ENCODE measurements at regions of chr16 and their contacts with region 1.

Region 1: GRCh38 chr16:83441517-83441916 is 366.3 kb upstream of the HSBP1 start:
- DNase-seq: no peak
- ATAC-seq: no peak
- H3K4me3 ChIP-seq: no peak overlapping the region
- H3K27ac ChIP-seq: no peak overlapping the region
- H3K4me1 ChIP-seq: no peaks in the 10 kb centered on the region
- H3K27me3 ChIP-seq: no peaks in the 10 kb centered on the region

Region 2: DNA sequence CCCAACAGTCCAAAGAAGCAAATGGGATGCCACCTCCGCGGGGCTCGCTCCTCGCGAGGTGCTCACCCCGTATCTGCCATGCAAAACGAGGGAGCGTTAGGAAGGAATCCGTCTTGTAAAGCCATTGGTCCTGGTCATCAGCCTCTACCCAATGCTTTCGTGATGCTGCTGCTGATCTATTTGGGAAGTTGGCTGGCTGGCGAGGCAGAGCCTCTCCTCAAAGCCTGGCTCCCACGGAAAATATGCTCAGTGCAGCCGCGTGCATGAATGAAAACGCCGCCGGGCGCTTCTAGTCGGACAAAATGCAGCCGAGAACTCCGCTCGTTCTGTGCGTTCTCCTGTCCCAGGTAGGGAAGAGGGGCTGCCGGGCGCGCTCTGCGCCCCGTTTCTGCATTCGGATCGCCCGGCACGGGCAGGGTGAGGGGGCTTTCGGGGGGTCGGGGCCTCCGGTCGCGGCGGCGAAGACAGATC is 814.7 kb before region 1 on chr16 and contains the start of gene CDH13:
- intact Hi-C with region 1: loop called in 1 of 4 experiments (anchors 10 kb)
- DNase-seq: peak; percentile 34 to 72 (median 66)
- ATAC-seq: peak; percentile 49 to 54
- H3K4me3 ChIP-seq: peak within 1 kb of the TSS; percentile 71
- H3K27ac ChIP-seq: peak within 1 kb of the TSS; percentile 17
- H3K4me1 ChIP-seq: peaks cover 20% of the 10 kb centered on the region
- H3K27me3 ChIP-seq: no peaks in the 10 kb centered on the region
- total RNA-seq, gene CDH13: 91.9 to 123 (median 103) TPM

Region 3: DNA sequence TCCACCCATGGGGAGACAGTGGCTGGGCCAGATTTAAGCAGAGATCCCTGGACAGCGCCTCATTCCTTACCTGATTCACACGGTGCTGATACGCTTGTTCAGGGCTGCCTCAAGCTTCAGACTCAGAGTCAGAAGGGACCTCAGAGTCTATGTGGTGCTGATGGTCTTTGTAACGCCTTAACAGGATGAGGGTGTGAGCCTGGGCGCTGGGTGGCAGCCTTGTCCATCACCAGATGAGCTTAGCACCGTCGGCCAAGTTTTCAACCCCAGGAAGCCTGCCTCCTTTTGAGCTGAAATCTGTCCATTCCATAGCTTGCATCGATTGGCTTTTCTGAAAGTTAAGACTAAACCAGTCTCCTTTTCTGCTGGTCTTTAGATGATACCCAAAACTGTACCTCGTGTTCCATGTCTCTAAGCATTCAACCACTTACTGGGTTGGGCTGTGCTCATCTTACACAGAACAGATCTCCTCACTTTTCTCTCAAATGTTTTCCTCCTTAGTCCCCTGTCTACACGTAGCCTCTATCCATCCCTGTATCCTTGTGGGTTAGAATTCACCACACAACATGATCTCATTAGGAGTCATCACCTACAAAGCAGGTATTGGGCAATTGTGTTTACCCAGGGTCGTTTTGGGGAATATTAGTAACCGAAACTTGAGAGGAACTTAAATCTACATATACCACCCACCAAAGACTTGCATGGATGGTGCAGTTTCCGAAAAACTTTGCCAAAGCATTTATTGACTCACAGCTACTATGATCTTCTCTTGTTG is 241.3 kb before region 1 on chr16:
- intact Hi-C with region 1: loop called in 2 of 4 experiments (anchors 10 kb)
- DNase-seq: peak in 2 of 3 donors; percentile 15 to 58
- ATAC-seq: peak; percentile 62 to 74
- H3K4me3 ChIP-seq: no peak overlapping the region
- H3K27ac ChIP-seq: no peak overlapping the region
- H3K4me1 ChIP-seq: no peaks in the 10 kb centered on the region
- H3K27me3 ChIP-seq: no peaks in the 10 kb centered on the region

Region 4: DNA sequence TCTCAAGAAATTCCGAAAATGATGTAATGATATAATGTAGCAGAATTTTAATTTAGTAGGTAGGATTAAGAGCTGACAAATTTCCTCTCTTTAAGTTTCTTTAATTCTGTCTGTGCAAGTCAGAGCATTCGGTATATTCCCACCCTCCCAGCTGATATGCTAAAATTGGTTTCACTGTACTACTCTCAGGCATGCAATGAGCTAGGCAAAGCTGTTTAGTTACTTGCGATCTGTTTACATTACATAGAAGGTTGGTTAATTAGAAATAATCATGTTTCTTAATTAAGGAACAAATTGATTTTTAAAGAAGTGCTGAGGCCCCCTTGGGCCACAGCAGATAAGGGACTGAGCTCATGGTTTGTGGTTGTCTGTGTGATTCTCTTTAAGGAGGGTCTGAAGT is 66.5 kb before region 1 on chr16:
- intact Hi-C with region 1: no loop called
- DNase-seq: no peak
- ATAC-seq: no peak
- H3K4me3 ChIP-seq: no peak overlapping the region
- H3K27ac ChIP-seq: no peak overlapping the region
- H3K4me1 ChIP-seq: no peaks in the 10 kb centered on the region
- H3K27me3 ChIP-seq: no peaks in the 10 kb centered on the region

Measured in right cardiac atrium (tissue), 5 donors.